PC-9 (cell line): ENCODE measurements at regions of chr2 and their contacts with region 1.

Region 1: GRCh38 chr2:12716282-12717190 is at the start of gene TRIB2:
- DNase-seq: peak; percentile 66 to 77
- H3K4me3 ChIP-seq: peak within 1 kb of the TSS; percentile 96
- H3K27ac ChIP-seq: peak within 1 kb of the TSS; percentile 94
- H3K4me1 ChIP-seq: peaks cover 35% of the 10 kb centered on the region
- H3K27me3 ChIP-seq: no peaks in the 10 kb centered on the region
- CTCF ChIP-seq: peak; percentile 8; the same call in 1 of the 2 replicates
- total RNA-seq, gene TRIB2: 18.9 and 20.2 TPM in 2 replicates

Region 2: GRCh38 chr2:11863513-11864328 is 852.8 kb before region 1 on chr2:
- CTCF ChIA-PET with region 1: interaction called, 8 read pairs
- POLR2A ChIA-PET with region 1: no interaction called
- intact Hi-C with region 1: loop called (anchors 1 kb)
- DNase-seq: peak; percentile 84 to 91
- H3K4me3 ChIP-seq: no peak overlapping the region
- H3K27ac ChIP-seq: peak overlapping the region; percentile 36
- H3K4me1 ChIP-seq: peaks cover 20% of the 10 kb centered on the region
- H3K27me3 ChIP-seq: no peaks in the 10 kb centered on the region
- CTCF ChIP-seq: peak; percentile 99

Region 3: GRCh38 chr2:12106440-12107080 is 610.0 kb before region 1 on chr2:
- CTCF ChIA-PET with region 1: no interaction called
- POLR2A ChIA-PET with region 1: no interaction called
- intact Hi-C with region 1: loop called (anchors 1 kb)
- DNase-seq: peak; percentile 84
- H3K4me3 ChIP-seq: no peak overlapping the region
- H3K27ac ChIP-seq: no peak overlapping the region
- H3K4me1 ChIP-seq: peaks cover 8% of the 10 kb centered on the region; the same call in 1 of the 2 replicates
- H3K27me3 ChIP-seq: no peaks in the 10 kb centered on the region
- CTCF ChIP-seq: no peak

Region 4: DNA sequence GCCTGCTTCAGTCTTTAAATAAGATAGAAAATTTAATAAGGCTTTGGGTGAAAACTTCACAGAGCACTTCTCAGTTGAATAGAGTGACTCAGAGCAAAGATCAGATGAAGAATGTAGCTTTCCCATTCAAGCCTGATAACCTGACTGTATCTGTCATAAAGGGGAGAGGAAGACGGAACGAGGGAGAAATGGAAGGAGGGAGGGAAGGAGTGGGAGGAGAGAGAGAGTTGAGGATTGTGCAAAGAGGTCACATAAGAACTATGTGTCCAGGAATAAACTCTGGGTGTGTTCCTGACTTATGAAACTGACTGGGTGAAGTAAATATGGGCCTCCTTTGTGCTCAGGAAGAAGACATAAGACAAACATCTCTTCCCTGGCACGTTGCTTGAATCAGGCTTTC is 584.6 kb before region 1 on chr2:
- CTCF ChIA-PET with region 1: no interaction called
- POLR2A ChIA-PET with region 1: no interaction called
- intact Hi-C with region 1: no loop called
- DNase-seq: peak; percentile 30 to 82
- H3K4me3 ChIP-seq: no peak overlapping the region
- H3K27ac ChIP-seq: peak overlapping the region; percentile 68
- H3K4me1 ChIP-seq: peaks cover 21% of the 10 kb centered on the region
- H3K27me3 ChIP-seq: no peaks in the 10 kb centered on the region
- CTCF ChIP-seq: no peak

Region 5: GRCh38 chr2:12303181-12304030 is 413.1 kb before region 1 on chr2:
- CTCF ChIA-PET with region 1: no interaction called
- POLR2A ChIA-PET with region 1: no interaction called
- intact Hi-C with region 1: loop called (anchors 5 kb)
- DNase-seq: peak; percentile 25 to 94
- H3K4me3 ChIP-seq: peak overlapping the region; percentile 9; the same call in 1 of the 2 replicates
- H3K27ac ChIP-seq: peak overlapping the region; percentile 81
- H3K4me1 ChIP-seq: peaks cover 37% of the 10 kb centered on the region
- H3K27me3 ChIP-seq: no peaks in the 10 kb centered on the region
- CTCF ChIP-seq: no peak

Region 6: GRCh38 chr2:12486205-12487118 is 230.1 kb before region 1 on chr2:
- CTCF ChIA-PET with region 1: interaction called, 3 read pairs
- POLR2A ChIA-PET with region 1: no interaction called
- intact Hi-C with region 1: loop called (anchors 1 kb)
- DNase-seq: peak; percentile 23 to 89
- H3K4me3 ChIP-seq: peak overlapping the region; percentile 32; the same call in 1 of the 2 replicates
- H3K27ac ChIP-seq: peak overlapping the region; percentile 56
- H3K4me1 ChIP-seq: peaks cover 31% of the 10 kb centered on the region
- H3K27me3 ChIP-seq: no peaks in the 10 kb centered on the region
- CTCF ChIP-seq: no peak

Region 7: DNA sequence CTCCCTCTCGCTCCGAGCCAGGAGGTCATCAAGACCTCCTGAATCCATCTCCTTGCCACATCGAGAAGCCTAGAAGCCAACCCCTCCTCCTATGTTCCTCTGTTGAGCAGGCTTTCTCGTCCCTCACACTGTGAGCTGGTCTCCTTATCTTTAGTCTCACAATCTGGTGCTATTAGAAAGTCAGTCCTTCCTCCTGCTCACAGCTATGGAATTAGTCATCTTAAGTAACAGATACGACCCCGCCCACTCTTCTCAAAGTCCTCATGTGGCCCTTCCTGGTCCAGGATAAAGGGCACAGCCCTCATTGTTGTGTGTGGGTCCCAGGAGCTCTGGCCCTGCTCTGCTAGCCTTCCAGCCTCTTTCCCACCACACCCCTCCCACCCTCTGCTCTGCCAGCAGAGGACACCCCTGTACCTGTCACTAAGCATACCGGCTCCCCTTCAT is 41.2 kb before region 1 on chr2:
- CTCF ChIA-PET with region 1: interaction called, 4 read pairs
- POLR2A ChIA-PET with region 1: no interaction called
- intact Hi-C with region 1: loop called (anchors 2 kb)
- DNase-seq: peak; percentile 47 to 84
- H3K4me3 ChIP-seq: no peak overlapping the region
- H3K27ac ChIP-seq: peak overlapping the region; percentile 57
- H3K4me1 ChIP-seq: peaks cover 19% of the 10 kb centered on the region
- H3K27me3 ChIP-seq: no peaks in the 10 kb centered on the region
- CTCF ChIP-seq: no peak

Region 8: GRCh38 chr2:13006829-13007717 is 290.5 kb after region 1 on chr2:
- CTCF ChIA-PET with region 1: interaction called, 4 read pairs
- POLR2A ChIA-PET with region 1: interaction called, 7 read pairs
- intact Hi-C with region 1: loop called (anchors 1 kb)
- DNase-seq: peak; percentile 56 to 61
- H3K4me3 ChIP-seq: no peak overlapping the region
- H3K27ac ChIP-seq: no peak overlapping the region
- H3K4me1 ChIP-seq: peaks cover 9% of the 10 kb centered on the region; the same call in 1 of the 2 replicates
- H3K27me3 ChIP-seq: no peaks in the 10 kb centered on the region
- CTCF ChIP-seq: peak; percentile 98